Activated naive CD4-positive, alpha-beta T cell treated with anti-CD3 and anti-CD28 coated beads, Interleukin-2, amount 10 ng/mL, durations not matched to agents 7 days and 5 days (primary cell): ENCODE measurements at regions of chr20 and their contacts with region 1.

Region 1: DNA sequence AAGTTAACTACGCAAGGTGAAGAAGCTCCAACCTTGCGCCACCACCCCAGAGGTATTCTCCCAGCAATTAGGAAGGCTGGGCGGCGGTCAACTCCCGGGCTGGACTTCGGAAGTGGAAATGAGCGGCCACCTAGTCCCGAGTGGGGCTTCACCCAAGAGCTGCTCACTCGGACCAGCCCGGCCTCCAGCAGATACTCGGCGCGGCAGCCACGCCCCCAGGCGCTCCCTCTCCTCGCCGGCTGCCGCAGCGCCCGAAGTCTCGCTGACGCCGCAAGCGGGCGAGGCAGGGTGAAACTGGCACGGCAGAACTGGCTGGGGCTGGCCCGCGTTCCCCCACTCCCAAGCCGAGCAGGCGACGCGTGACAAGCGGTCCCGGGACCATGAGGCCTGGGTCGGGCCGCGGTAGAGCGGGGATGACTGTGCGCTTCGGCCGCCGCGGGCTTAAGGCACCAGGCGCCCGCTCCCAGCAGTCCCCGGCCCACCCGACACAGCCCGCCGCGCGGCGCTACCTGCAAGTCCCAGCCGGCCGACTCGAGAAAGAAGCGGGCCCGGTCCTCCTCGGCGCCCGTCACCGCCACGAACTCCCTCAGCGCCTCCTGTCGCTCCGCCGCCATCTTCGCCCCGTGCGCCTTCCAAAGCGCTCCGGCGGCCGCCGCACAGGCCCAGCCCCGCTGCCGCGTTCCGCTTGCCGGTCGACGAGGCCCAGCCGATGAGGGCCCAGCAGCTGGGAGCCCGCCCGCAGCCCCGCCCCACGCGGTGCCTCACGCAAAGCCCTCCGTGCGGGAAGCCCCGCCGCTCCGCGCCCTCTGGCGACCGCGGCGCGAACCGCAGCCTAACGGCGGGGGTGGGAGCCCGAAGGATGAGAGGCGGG is at the start of gene NSFL1C:
- DNase-seq: peak; percentile 97
- H3K4me3 Mint-ChIP-seq: peak within 1 kb of the TSS; percentile 78
- H3K27ac Mint-ChIP-seq: peak within 1 kb of the TSS; percentile 77
- H3K4me1 Mint-ChIP-seq: peaks cover 47% of the 10 kb centered on the region
- H3K27me3 Mint-ChIP-seq: peaks cover 30% of the 10 kb centered on the region

Region 2: GRCh38 chr20:1299522-1299921 is 166.9 kb before region 1 on chr20:
- CTCF ChIA-PET with region 1: interaction called, 12 read pairs
- DNase-seq: peak; percentile 61
- H3K4me3 Mint-ChIP-seq: no peak overlapping the region
- H3K27ac Mint-ChIP-seq: no peak overlapping the region
- H3K4me1 Mint-ChIP-seq: peaks cover 26% of the 10 kb centered on the region
- H3K27me3 Mint-ChIP-seq: no peaks in the 10 kb centered on the region